ENCODE measurements at regions of chr9 and their contacts with region 1.

Region 1: GRCh38 chr9:77899679-77900354 is 131.8 kb downstream of the GNAQ start:
- DNase-seq: peak; percentile 82
- H3K4me3 ChIP-seq: no peak overlapping the region
- H3K27ac ChIP-seq: no peak overlapping the region
- H3K4me1 ChIP-seq: peaks cover 16% of the 10 kb centered on the region
- H3K27me3 ChIP-seq: no peaks in the 10 kb centered on the region
- CTCF ChIP-seq: no peak

Region 2: DNA sequence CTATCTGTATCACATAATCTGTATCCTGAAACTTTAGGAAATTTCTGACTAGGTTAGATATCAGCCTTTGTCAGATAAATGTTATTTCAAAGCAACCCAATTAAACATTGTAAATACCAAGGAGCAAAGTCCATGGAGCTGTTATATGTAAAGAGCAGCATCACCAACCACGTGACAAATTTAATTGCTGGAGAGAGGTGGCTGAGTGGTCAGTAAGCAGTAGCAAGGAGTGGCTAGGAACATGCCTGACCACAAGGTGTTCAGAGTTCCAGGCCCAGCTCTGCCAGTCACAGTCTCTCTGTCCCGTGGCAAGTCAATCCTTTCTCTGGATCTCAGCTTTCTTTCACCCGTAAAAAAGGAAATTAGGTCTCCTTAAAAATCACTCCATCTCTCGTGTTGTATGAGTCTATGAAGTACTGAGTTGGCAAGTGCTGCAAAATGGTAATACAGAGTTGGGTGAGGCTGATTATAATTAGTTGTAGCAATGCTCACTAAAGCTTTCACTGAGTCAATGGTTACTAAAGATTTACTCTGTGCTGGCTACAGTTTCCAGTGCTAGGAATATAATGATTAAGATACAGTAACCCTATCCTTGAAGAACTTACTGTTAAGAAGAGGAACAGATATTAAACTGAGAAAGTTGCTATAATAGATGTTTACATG is 34.3 kb before region 1 on chr9:
- CTCF ChIA-PET with region 1: no interaction called
- dilution Hi-C with region 1: loop called (anchors 5 kb)
- in situ Hi-C with region 1: no loop called
- intact Hi-C with region 1: no loop called
- DNase-seq: no peak
- H3K4me3 ChIP-seq: no peak overlapping the region
- H3K27ac ChIP-seq: no peak overlapping the region
- H3K4me1 ChIP-seq: no peaks in the 10 kb centered on the region
- H3K27me3 ChIP-seq: no peaks in the 10 kb centered on the region
- CTCF ChIP-seq: no peak

Region 3: DNA sequence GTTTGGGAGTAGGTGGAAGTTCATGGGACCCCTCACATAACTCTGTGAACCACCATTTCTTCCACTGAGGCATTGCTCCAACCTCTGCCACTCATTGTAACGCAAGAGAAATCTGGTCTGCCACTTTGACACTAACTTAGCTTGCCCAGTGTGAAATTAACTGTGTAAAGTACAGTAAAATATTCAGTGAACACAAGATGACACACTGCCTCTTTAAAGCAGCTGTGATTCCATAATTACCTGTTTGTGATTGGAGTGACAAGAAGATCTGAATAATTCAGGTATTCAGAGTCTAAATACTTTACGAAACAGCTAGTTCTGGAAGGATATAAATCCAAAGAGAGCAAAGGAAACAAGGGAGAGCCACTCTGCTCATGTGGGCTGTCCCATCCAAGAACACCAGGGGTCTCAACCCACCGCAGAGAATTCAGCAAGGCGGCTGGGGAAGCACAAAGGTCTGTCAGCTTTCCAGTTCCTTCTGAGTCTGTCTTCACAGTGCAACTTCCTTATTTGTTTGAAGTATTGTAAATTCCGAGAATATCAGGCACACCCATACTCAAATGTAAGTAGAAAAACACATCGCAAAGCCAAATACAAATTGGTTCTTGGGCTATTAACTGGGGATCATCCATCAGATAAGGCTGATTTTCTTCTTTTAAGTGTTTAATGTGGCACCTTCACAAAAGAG is 44.9 kb after region 1 on chr9:
- CTCF ChIA-PET with region 1: no interaction called
- dilution Hi-C with region 1: no loop called
- in situ Hi-C with region 1: no loop called
- intact Hi-C with region 1: no loop called
- DNase-seq: no peak
- H3K4me3 ChIP-seq: no peak overlapping the region
- H3K27ac ChIP-seq: no peak overlapping the region
- H3K4me1 ChIP-seq: no peaks in the 10 kb centered on the region
- H3K27me3 ChIP-seq: no peaks in the 10 kb centered on the region
- CTCF ChIP-seq: no peak

Region 4: GRCh38 chr9:78267889-78268288 is 368.1 kb after region 1 on chr9:
- CTCF ChIA-PET with region 1: no interaction called
- dilution Hi-C with region 1: no loop called
- in situ Hi-C with region 1: no loop called
- intact Hi-C with region 1: no loop called
- DNase-seq: no peak
- H3K4me3 ChIP-seq: no peak overlapping the region
- H3K27ac ChIP-seq: no peak overlapping the region
- H3K4me1 ChIP-seq: no peaks in the 10 kb centered on the region
- H3K27me3 ChIP-seq: no peaks in the 10 kb centered on the region
- CTCF ChIP-seq: no peak

Measured in mammary epithelial cell (primary cell).